Caco-2 (cell line): ENCODE measurements at regions of chr19 and their contacts with region 1.

Region 1: DNA sequence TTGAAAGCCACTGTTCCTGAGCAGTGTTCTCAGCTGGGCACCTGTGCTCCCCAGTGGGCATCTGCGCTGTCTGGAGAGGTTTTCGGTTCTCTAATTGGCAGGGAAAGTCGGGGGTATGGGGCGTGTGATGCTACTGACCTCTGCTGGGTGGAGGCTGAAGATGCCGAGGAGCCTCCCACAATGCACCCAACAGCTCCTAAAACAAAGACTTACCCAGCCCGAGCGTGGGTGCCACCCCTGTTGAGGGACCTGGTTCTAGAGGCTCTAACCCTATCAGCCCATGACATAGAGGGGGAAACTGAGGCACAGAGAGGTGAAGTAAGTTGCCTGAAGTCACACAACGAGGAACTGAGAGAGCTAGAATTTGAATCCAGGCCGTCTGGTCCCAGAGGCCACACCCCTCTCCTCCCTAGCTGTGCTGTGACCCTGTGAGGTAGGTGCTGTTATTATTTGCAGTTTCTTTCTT is 2.3 kb downstream of the SPACA4 start:
- DNase-seq: peak in 1 of 2 experiments; percentile 70
- H3K4me3 ChIP-seq: no peak overlapping the region
- H3K4me3 Mint-ChIP-seq: peak overlapping the region; percentile 54
- H3K27ac Mint-ChIP-seq: no peak overlapping the region
- H3K4me1 ChIP-seq: no peaks in the 10 kb centered on the region
- H3K4me1 Mint-ChIP-seq: peaks cover 7% of the 10 kb centered on the region
- H3K27me3 ChIP-seq: no peaks in the 10 kb centered on the region
- H3K27me3 Mint-ChIP-seq: no peaks in the 10 kb centered on the region
- CTCF ChIP-seq: peak; percentile 82 to 86

Region 2: DNA sequence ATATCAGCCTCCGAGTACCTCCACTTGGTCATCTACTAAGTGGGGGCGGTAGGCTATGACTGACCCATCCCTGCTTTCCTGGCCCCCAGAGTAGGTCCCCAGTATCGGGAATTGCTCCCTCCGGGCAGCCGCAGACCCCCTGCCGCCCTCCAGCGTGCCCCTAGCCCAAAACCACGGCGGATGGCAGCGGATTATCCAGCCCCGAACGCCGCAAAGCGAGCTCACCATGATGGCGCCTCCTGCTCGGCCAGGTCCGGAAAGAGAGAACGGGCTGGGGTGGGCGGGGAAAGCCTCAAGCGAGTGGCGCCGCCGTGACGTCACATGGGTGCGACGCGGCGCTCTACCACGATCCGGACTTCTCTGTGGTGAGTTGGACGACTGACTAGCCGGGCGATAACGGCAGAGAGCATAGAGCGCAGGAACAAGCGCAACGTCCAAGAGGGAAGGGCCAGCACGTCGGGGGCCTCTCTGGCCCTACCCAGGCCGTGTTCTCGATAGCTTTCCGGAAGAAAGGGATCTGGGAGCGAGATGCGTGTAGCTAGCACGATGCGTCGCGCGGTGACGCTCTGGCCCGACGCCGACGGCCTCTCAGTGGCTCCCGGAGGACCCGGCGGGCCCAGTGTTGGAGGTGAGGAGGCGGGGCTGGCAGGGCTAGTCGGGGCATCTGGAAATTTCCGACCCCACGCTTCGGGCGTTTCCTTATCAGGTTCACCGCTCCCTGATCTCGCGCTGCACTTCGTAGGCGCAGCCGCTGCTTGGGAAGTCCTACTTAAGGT is 10.3 kb after region 1 on chr19 and contains the starts of genes RPL18 and SPHK2:
- CTCF ChIA-PET with region 1: interaction called, 14 read pairs
- POLR2A ChIA-PET with region 1: interaction called, 16 read pairs
- intact Hi-C with region 1: no loop called
- DNase-seq: peak; percentile 99
- H3K4me3 ChIP-seq: peak within 1 kb of the TSS; percentile 85
- H3K4me3 Mint-ChIP-seq: peak within 1 kb of the TSS; percentile 96
- H3K27ac Mint-ChIP-seq: peak within 1 kb of the TSS; percentile 98
- H3K4me1 ChIP-seq: peaks cover 39% of the 10 kb centered on the region
- H3K4me1 Mint-ChIP-seq: peaks cover 36% of the 10 kb centered on the region
- H3K27me3 ChIP-seq: no peaks in the 10 kb centered on the region
- H3K27me3 Mint-ChIP-seq: no peaks in the 10 kb centered on the region
- CTCF ChIP-seq: no peak
- total RNA-seq, gene RPL18: 1,812 and 1,896 TPM in 2 replicates
- total RNA-seq, gene SPHK2: 134 and 140 TPM in 2 replicates

Region 3: DNA sequence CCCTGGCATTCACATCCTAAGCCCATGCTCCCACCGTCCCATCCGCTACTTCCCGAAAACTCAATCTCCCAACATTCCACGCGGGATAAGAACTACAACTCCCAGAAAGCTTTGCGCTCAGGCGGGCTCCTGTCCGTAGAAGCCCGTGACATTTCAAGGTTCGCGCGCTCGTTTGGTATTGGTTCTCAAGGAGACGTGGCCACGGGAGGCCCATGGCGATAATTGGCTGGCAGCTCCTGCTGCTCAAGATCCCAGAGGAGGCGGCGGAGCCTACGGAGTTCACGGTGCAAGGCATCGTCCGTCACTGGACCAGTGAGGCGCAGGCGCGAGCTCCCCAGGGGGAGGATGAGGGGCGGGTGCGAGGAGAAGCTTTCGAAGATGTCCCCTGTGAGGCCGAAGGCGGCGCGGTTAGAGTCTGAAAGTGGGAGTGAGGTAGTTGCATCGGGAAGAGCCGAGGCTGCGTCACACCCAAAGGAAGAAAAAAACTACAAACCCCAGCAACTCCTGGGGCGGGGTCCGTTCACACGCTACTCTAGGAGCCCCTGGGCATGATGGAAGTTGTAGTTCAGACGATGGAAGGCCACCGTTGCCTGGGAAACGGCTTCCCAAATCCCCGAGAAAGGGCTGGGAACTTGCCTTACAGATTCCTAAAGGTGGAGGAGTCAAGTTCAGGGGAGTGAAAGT is 111.9 kb after region 1 on chr19:
- CTCF ChIA-PET with region 1: no interaction called
- POLR2A ChIA-PET with region 1: no interaction called
- intact Hi-C with region 1: no loop called
- DNase-seq: peak; percentile 97 to 99
- H3K4me3 ChIP-seq: peak overlapping the region; percentile 79
- H3K4me3 Mint-ChIP-seq: peak overlapping the region; percentile 92
- H3K27ac Mint-ChIP-seq: peak overlapping the region; percentile 97
- H3K4me1 ChIP-seq: peaks cover 6% of the 10 kb centered on the region
- H3K4me1 Mint-ChIP-seq: peaks cover 26% of the 10 kb centered on the region
- H3K27me3 ChIP-seq: no peaks in the 10 kb centered on the region
- H3K27me3 Mint-ChIP-seq: no peaks in the 10 kb centered on the region
- CTCF ChIP-seq: no peak